ENCODE measurements at regions of chr22 and their contacts with region 1.

Region 1: GRCh38 chr22:36331306-36331911 is 56.4 kb downstream of the MYH9 start:
- DNase-seq: peak; percentile 76 to 85
- ATAC-seq: peak; percentile 31 to 70 (median 63)
- H3K4me3 ChIP-seq: peak overlapping the region in 6 of 10 donors; percentile 6 to 23 (median 12)
- H3K27ac ChIP-seq: peak overlapping the region; percentile 84 to 98 (median 96)
- H3K4me1 ChIP-seq: peaks cover 83 to 100% (median 100%) of the 10 kb centered on the region in 9 donors
- H3K27me3 ChIP-seq: no peaks in the 10 kb centered on the region
- CTCF ChIP-seq: no peak

Region 2: GRCh38 chr22:36365020-36365411 is 33.6 kb after region 1 on chr22:
- intact Hi-C with region 1: loop called in 8 of 10 experiments (anchors 5 to 10 kb)
- DNase-seq: peak in 1 of 2 donors; percentile 80
- ATAC-seq: peak in 7 of 8 donors; percentile 39 to 80 (median 57)
- H3K4me3 ChIP-seq: peak overlapping the region in 2 of 10 donors; percentile 2 to 6
- H3K27ac ChIP-seq: peak overlapping the region; percentile 48 to 93 (median 86)
- H3K4me1 ChIP-seq: peaks cover 84 to 100% (median 100%) of the 10 kb centered on the region in 9 donors
- H3K27me3 ChIP-seq: no peaks in the 10 kb centered on the region
- CTCF ChIP-seq: no peak

Region 3: DNA sequence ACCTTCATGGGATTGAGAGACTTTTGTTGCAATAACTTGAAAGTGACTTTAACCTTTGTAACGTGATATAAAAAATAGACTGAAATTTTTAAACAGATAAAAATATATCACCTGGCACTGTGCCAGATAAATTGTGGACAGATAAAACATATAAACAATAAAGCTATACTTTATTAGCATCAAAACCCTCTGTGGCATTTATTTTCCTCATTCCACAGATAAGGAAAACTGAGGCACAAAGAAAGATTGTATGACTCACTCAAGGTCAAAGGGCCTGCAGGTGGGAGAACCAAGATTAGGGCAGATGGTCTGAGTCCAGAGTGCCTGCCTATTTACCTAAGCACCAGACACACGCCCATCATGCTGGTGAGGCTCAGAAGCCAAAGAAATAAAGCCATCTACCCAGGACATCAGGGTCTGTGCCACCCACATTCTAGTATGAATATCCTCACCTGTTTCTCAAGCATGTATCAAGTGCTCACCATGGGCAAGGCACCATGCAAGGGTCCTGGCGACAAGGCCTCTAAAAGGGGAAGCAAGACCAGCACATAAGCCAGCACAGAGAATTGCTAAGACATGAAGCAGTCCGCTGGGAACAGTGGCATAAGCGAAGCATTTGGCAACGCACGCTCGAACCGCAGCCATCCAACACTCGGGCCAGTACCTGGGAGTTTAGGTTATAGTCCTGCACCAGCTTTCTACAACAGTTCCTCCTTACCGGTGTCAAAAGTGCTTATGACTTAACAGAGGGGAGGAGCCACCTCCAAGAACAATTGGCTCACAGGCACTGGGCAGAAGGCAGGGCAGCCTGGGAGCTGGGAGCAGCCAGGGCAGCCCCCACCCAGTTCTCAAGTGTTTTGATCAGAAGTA is 38.7 kb after region 1 on chr22:
- intact Hi-C with region 1: loop called in 8 of 10 experiments (anchors 5 to 10 kb)
- DNase-seq: peak in 1 of 2 donors; percentile 55
- ATAC-seq: peak; percentile 40 to 70 (median 58)
- H3K4me3 ChIP-seq: peak overlapping the region in 8 of 10 donors; percentile 9 to 30 (median 24)
- H3K27ac ChIP-seq: peak overlapping the region; percentile 74 to 93 (median 84)
- H3K4me1 ChIP-seq: peaks cover 93 to 100% (median 100%) of the 10 kb centered on the region in 9 donors
- H3K27me3 ChIP-seq: no peaks in the 10 kb centered on the region
- CTCF ChIP-seq: no peak

Region 4: DNA sequence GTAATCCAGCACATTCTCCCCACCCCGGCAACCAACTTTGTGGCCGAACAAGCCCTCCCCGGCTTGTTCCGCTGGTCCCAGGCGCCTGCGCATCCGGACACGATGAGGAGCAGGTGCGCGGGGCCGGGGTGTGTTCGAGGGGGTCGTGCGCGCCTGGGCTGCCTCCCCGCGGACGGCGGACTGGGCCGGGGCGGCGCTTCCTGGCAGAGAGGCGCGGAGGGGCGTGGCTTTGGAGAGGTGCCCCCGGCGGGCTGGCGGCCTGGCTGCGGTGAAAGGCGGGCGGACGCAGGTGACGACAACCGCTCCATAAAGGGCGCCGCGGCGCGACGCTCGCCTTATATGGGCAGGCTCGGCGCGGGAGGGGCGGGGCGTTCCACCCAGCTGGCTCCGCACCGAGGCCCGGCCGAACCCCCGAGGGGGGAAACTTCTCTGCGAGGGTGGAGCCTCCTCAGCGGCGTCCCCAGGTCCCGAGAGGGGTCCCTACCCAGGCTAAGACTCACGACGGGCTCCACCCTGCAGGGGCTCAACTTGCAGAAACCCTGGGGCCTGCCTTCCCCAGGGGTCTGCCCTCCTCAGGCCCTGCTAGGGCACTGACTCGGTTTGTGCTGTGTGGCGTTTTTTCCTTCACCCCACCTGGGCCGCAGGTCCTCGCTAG is 123.6 kb after region 1 on chr22:
- intact Hi-C with region 1: loop called in 2 of 10 experiments (anchors 5 kb)
- DNase-seq: peak; percentile 93 to 94
- ATAC-seq: peak; percentile 85 to 92 (median 88)
- H3K4me3 ChIP-seq: peak overlapping the region in 9 of 10 donors; percentile 37 to 59 (median 54)
- H3K27ac ChIP-seq: peak overlapping the region; percentile 72 to 97 (median 94)
- H3K4me1 ChIP-seq: peaks cover 24 to 86% (median 65%) of the 10 kb centered on the region in 9 donors
- H3K27me3 ChIP-seq: no peaks in the 10 kb centered on the region
- CTCF ChIP-seq: peak in 4 of 9 donors; percentile 16 to 48 (median 40)

Region 5: DNA sequence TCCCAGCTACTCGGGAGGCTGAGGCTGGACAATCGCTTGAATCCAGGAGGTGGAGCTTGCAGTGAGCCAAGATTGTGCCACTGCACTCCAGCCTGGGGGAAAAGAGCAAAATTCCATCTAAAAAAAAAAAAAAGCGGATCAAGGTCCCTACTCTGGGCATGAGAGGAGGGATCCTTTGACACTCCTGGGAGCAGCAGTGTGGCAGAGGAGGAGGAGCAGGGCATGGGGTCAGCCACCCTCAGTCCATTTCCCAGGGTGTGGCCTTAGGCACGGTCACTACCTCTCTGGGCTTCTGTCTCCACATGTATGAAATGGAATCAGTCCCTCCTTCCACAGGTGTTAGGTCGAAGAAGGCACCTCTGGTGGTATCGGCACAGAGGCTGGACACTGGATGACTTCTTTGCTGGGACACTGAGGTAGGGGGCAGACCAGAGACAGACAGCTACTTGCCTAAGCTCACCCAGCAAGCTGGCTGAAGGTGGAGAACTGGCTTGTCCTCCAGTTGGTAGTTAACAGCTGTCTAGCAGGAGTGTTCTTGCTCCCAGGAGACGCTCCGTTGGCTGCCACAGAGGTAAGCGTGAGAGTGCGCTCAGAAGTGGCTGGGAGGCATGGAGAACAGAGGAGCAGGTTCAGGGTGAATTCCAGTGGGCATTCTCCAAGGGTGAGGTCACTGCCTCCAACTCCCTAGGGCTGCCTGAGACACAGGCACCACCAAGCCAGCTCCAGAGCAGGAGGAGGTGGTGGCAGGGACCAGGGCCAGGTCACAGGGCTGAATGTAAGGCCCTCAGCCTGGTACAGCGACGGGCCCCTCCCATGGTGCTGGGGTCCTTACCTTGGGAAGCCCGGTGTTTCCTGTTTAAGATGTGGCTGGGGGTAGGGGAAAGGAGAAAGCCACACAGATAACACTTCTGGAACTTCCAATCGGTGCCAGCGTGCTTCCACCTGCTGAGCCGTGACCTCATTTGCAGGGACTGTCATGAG is 130.6 kb after region 1 on chr22:
- intact Hi-C with region 1: loop called in 4 of 10 experiments (anchors 1 to 5 kb)
- DNase-seq: no peak
- ATAC-seq: peak in 6 of 8 donors; percentile 1 to 41 (median 22)
- H3K4me3 ChIP-seq: no peak overlapping the region
- H3K27ac ChIP-seq: peak overlapping the region; percentile 62 to 97 (median 90)
- H3K4me1 ChIP-seq: peaks cover 21 to 83% (median 73%) of the 10 kb centered on the region in 9 donors
- H3K27me3 ChIP-seq: no peaks in the 10 kb centered on the region
- CTCF ChIP-seq: no peak

Measured in heart right ventricle (tissue), 16 donors.